Panc1 (cell line): ENCODE measurements at regions of chr5 and their contacts with region 1.

Region 1: DNA sequence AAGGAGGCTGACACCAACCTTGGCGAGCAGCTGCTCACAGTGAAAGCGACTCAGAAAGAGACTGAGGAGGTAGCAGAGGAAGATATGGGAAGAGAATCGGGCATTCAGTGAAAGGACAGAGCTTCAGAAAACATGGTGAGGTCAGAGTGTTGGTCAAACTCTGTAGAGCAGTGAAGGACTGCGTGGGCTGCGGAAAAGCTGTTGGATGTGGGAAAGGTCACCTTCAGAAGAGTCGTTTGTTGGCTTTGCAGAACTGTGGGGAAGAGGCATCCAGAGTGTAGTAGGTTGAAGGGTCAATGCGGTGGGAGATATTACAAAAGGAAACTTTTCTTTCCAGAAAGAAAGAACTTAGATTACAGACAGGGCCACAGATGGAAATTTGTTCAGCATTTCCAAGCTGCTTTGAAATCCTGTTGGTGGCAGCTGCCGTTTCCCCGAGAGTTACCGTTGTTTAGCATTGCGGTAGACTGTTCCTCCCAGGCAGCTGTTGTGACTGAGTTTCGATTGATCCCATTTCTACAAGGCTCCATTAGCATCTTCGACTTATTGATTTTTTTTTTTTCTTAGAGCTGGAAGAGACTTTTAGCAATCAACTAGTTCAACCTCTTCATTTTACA is 58.3 kb upstream of the AFAP1L1 start:
- DNase-seq: no peak
- ATAC-seq: no peak
- H3K4me3 ChIP-seq: no peak overlapping the region
- H3K27ac ChIP-seq: no peak overlapping the region
- H3K4me1 ChIP-seq: no peaks in the 10 kb centered on the region
- H3K27me3 ChIP-seq: no peaks in the 10 kb centered on the region
- CTCF ChIP-seq: no peak

Region 2: DNA sequence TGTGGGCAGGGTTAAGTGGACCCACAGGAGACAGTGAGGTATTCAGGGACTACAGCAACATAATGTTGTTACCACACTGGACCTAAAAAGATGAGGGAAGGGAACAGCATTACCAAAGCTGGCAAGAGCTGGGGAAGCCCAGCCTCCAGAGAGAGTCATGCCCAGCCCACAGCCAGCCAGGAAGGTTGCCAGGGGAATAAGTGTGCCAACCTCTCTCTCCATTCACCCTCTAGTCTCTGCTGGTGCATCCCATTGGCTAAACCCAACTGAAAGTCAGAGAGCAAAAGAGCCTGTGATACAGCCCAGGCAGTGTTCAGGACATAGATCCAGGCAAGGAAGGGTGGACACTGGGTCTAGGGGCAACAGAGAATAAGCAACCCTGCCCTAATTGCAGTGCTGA is 22.5 kb after region 1 on chr5:
- CTCF ChIA-PET with region 1: no interaction called
- POLR2A ChIA-PET with region 1: interaction called, 15 read pairs
- in situ Hi-C with region 1: no loop called
- intact Hi-C with region 1: no loop called
- DNase-seq: no peak
- ATAC-seq: no peak
- H3K4me3 ChIP-seq: no peak overlapping the region
- H3K27ac ChIP-seq: no peak overlapping the region
- H3K4me1 ChIP-seq: no peaks in the 10 kb centered on the region
- H3K27me3 ChIP-seq: no peaks in the 10 kb centered on the region
- CTCF ChIP-seq: no peak

Region 3: GRCh38 chr5:150189728-150190502 is 976.5 kb after region 1 on chr5 and contains the start of gene SLC6A7:
- CTCF ChIA-PET with region 1: no interaction called
- POLR2A ChIA-PET with region 1: no interaction called
- in situ Hi-C with region 1: no loop called
- intact Hi-C with region 1: no loop called
- DNase-seq: no peak
- ATAC-seq: no peak
- H3K4me3 ChIP-seq: no peak within 1 kb of the TSS
- H3K27ac ChIP-seq: no peak within 1 kb of the TSS
- H3K4me1 ChIP-seq: no peaks in the 10 kb centered on the region
- H3K27me3 ChIP-seq: peaks cover 9% of the 10 kb centered on the region
- CTCF ChIP-seq: no peak
- total RNA-seq, gene SLC6A7: not detected